Upper lobe of right lung (tissue), 1 donor: ENCODE measurements at regions of chr2 and their contacts with region 1.

Region 1: DNA sequence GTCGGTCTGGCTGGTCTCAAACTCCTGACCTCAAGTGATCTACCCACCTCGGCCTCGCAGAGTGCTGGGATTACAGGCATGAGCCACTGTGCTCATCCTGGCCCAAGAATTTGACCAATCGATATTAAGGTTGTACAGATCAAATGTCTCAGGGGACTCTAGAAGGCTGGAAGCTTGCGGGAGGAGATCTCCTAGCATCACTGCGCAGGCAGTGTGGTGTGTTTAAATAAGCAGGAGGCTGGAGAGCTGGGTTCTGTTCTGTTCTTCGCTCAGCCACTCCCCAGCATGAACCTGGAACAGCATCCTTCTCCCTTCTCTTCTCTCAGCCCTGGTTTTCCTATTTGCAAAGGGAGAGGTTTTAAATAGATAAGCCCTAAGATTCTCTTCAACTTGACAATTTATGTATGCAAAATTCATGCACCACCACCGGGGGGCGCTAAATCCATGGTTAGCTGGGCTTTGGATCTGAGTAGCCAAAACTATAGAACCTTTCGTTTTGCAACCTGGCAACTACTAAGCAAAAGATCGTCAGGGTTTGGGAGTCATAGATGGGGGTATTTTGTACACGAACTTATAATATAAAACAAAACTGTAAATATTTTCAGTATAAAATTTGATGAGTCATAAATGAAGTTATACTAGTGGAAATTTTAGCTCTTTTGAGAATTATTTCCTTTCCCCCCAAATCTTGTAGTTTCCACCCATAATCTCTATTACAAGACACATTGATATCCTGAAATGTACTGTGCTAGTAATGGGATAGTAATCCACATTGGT is 60.6 kb downstream of the SLC16A14 start:
- DNase-seq: peak; percentile 80
- ATAC-seq: peak; percentile 85
- H3K4me3 ChIP-seq: peak overlapping the region; percentile 3
- H3K27ac ChIP-seq: no peak overlapping the region
- H3K4me1 ChIP-seq: no peaks in the 10 kb centered on the region
- H3K27me3 ChIP-seq: no peaks in the 10 kb centered on the region
- CTCF ChIP-seq: peak; percentile 86

Region 2: GRCh38 chr2:230160112-230160660 is 152.1 kb after region 1 on chr2:
- intact Hi-C with region 1: loop called (anchors 10 kb)
- DNase-seq: no peak
- ATAC-seq: peak; percentile 89
- H3K4me3 ChIP-seq: no peak overlapping the region
- H3K27ac ChIP-seq: no peak overlapping the region
- H3K4me1 ChIP-seq: no peaks in the 10 kb centered on the region
- H3K27me3 ChIP-seq: no peaks in the 10 kb centered on the region
- CTCF ChIP-seq: peak; percentile 84